Cardiac septum (tissue), 1 donor: ENCODE measurements at regions of chr18 and their contacts with region 1.

Region 1: GRCh38 chr18:36309436-36310391 is 12.2 kb downstream of the FHOD3 start:
- DNase-seq: no peak

Region 2: DNA sequence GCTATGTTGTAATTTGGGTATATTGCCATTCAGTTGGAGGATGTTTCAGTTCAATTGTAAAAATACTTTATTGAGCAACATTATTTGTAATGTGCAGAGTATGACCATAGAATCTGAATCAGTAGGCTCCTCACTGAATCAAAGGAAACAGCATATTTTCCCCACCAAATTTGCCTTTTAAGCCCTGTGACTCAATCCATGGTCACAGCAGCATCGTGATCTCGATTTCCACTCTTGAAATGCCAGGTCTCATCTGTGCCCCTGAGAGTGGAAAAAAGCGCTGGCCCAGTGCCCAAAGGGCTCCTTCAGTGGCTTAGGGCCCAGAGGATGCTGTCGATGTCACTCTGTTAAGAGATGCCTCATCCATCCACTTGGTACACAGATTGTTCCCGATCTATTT is 45.3 kb after region 1 on chr18:
- intact Hi-C with region 1: loop called (anchors 5 kb)
- DNase-seq: no peak

Region 3: DNA sequence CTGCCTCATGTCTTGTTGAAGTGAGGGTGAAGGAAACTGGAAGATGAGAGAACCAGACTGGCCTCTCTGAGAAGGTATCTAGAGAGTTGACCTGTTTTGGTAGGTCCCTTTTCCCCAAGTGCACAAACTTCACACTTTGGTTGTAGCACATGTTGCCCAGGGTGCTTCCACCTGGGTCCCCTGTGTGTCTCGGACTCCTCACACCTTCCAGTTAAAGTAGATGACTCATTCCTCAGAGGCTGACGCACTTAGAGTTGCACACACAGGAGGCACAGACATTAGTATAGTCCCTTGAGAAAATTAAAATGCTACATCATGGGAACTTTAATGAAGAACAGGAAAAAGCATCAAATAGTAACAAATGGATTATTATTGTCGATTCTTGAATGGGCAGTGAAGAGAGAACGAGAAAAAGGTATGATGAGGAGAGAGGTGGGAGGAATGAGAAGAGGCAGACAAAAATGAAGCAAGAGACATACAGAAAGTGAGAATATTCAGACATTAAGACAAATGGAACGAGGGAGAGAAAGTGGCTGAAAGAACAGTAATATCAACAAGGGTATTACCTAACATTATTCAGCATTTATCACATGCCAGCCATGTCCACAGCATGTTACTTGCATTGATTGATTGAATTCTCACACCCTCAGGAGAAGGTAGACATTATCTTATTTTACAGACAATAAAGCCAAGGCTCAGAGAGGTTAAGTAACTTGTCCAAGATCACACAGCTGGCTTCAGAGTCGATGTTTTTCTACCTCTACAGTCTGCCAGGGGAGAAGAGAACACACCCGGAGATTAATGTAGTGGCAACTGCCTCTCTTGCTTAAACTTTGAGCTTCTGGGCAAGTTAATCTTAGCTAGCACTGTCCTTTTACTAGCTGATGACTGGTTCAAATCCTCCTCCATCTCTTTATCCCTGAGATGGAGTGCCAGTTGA is 56.4 kb after region 1 on chr18:
- intact Hi-C with region 1: no loop called
- DNase-seq: no peak